Gastrocnemius medialis (tissue), 4 donors: ENCODE measurements at regions of chr18 and their contacts with region 1.

Region 1: GRCh38 chr18:28834889-28835288 is 658.0 kb upstream of the CDH2 start:
- DNase-seq: no peak
- ATAC-seq: no peak
- H3K4me3 ChIP-seq: no peak overlapping the region
- H3K27ac ChIP-seq: no peak overlapping the region
- H3K4me1 ChIP-seq: no peaks in the 10 kb centered on the region
- H3K27me3 ChIP-seq: no peaks in the 10 kb centered on the region
- CTCF ChIP-seq: no peak
- POLR2A ChIP-seq: no peak

Region 2: DNA sequence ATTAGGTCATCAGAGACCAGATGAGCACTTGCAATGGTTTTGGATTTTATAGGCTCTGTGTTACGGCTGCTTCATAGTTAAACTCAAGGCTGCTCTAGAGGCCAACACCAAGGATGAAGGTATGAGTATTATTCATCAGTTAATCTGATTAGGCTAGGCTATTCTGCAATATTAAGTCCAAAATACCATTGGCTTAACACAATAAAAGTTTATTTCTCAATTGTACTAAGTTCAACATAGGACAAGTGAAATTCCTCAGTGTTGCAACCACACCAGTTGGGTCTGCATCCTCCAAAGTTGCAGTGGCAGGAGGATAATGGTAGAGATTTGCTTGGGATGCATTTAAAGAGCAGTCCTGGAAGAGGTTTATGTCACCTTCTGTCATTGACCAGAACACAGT is 119.7 kb before region 1 on chr18:
- in situ Hi-C with region 1: no loop called
- intact Hi-C with region 1: no loop called
- DNase-seq: no peak
- ATAC-seq: no peak
- H3K4me3 ChIP-seq: no peak overlapping the region
- H3K27ac ChIP-seq: no peak overlapping the region
- H3K4me1 ChIP-seq: no peaks in the 10 kb centered on the region
- H3K27me3 ChIP-seq: no peaks in the 10 kb centered on the region
- CTCF ChIP-seq: no peak
- POLR2A ChIP-seq: no peak

Region 3: DNA sequence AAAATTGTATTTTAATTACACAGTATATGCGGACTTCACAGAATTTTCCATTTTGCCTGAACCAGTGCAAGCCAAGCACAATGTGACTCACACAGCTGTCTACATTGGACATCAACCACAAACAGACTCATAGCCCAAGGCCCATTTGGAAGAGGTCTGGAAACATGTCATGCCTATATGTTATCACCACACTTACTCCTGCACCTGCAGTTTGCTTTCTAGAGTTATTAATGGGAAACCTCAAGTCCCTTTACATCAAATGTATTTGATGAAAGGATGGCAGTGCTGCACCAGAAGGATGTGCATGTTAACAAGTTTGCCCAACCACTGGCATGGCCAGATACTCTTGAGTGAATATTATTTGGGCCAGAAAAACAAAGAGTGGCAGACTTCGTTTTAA is 109.0 kb before region 1 on chr18:
- in situ Hi-C with region 1: no loop called
- intact Hi-C with region 1: no loop called
- DNase-seq: no peak
- ATAC-seq: no peak
- H3K4me3 ChIP-seq: no peak overlapping the region
- H3K27ac ChIP-seq: no peak overlapping the region
- H3K4me1 ChIP-seq: no peaks in the 10 kb centered on the region
- H3K27me3 ChIP-seq: no peaks in the 10 kb centered on the region
- CTCF ChIP-seq: no peak
- POLR2A ChIP-seq: no peak

Region 4: DNA sequence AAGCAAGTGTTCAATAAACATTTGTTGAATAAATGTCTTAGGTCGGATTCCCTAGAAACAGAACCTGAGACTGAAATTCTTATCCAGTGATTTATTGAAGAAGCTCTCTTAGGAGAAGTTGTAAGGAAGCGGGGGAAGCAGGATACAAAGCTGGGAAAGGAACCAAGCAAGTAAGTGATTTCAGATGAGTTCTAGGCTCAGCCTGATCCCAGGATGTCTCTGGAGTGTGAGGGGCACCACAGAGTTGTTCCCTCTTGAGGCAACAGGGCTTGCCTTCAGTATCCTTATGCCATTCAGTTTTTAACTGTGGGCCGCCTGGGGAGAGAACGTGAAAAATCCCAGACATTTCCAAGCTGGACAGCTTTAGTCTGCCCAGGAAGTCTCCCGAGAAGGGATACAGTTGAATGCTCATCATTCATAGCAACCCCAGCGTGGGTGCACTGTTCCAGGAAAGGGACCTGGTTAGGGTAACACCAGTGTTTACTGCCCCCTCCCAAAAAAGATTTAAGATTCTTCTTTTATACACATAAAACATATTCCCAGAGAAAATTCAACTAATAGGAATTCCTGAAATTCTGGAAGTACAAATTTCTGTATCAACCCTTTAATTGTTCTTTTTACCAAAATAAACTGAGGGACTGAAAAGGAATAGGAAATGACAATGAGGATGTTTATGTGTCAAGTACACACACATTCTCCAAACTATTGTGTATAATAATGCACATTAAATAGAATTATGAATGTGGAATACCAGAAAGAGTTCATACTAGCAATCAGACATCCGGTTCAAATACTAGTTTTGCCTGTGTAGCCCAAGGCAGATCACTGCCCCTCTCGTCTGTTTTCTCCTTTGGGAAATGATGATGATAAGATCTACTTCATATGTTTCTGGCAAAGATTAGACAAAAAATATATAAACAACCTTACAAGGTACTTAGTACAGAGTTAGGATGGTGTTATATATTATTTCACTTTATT is 65.8 kb before region 1 on chr18:
- in situ Hi-C with region 1: no loop called
- intact Hi-C with region 1: no loop called
- DNase-seq: no peak
- ATAC-seq: no peak
- H3K4me3 ChIP-seq: no peak overlapping the region
- H3K27ac ChIP-seq: no peak overlapping the region
- H3K4me1 ChIP-seq: no peaks in the 10 kb centered on the region
- H3K27me3 ChIP-seq: no peaks in the 10 kb centered on the region
- CTCF ChIP-seq: no peak
- POLR2A ChIP-seq: no peak

Region 5: DNA sequence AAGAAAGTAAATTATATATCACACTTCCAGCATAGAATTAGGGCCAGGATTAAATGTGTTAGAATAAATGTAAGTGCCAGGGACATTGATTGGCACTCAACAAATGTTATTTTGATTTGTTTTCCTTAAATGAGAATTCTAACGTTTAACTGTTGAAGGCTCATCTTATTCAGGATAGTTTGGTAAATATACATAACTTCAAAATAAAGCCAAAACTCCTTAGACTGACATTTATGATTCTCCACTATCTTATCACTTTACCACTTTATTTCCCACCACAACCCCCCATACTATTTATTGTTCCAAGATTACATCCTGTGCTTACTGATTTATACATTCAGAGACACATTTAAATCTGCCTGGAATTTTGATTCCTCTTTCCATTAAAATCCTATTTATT is 111.6 kb after region 1 on chr18:
- in situ Hi-C with region 1: loop called in 1 of 4 experiments (anchors 25 kb)
- intact Hi-C with region 1: no loop called
- DNase-seq: no peak
- ATAC-seq: no peak
- H3K4me3 ChIP-seq: no peak overlapping the region
- H3K27ac ChIP-seq: no peak overlapping the region
- H3K4me1 ChIP-seq: no peaks in the 10 kb centered on the region
- H3K27me3 ChIP-seq: no peaks in the 10 kb centered on the region
- CTCF ChIP-seq: no peak
- POLR2A ChIP-seq: no peak

Region 6: DNA sequence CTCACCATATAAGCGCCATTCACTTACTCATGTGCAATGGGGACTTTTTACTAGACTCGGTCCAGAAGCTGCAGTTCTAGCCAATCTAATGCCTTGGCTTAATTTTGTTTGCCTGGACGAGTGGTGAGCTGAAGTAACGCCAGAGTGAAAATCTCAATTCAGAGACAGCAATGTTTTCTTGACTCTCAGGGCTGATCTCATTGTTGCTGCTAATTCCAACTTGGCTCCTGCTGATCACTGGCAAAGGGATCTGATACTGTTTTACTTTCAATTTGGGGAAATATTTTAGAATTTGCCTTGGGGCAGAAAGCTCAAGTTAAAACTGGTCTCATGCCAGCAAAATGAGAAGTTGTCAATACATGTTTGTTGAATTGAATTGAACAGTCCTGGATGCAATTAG is 248.7 kb after region 1 on chr18:
- in situ Hi-C with region 1: no loop called
- intact Hi-C with region 1: no loop called
- DNase-seq: no peak
- ATAC-seq: no peak
- H3K4me3 ChIP-seq: no peak overlapping the region
- H3K27ac ChIP-seq: no peak overlapping the region
- H3K4me1 ChIP-seq: no peaks in the 10 kb centered on the region
- H3K27me3 ChIP-seq: no peaks in the 10 kb centered on the region
- CTCF ChIP-seq: no peak
- POLR2A ChIP-seq: no peak